Transverse colon (tissue), 4 donors: ENCODE measurements at regions of chr7 and their contacts with region 1.

Region 1: DNA sequence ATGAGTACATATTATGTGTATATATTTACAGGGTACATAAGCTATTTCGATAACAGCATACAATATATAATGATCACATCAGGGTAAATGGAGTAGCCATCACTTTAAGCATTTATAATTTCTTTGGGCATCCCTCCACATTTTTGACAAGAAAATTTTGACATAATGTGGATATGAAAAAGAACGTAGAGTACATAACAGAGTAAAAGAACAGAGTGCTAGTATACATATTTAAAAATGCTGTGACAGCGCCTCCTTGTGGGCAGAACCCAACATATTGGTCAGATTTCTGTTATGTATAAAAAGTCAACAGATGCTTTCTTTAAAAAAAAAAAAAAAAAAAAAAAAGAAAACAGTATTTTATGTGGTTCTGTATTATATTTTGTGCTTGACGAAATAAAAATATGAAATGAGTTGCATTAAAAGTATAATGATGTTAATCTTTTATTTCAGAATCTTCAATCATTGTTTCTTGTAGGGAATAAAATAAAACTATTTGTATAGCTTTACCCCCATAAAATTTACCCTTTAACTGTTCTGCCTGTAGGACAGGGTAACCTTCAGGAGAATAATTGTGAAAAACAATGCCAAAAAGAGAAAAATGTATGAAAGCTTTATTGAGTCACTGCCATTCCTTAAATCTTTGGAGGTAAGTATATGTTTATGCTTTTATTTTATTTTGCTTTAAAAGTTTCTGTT is 18.3 kb upstream of the HBP1 start:
- DNase-seq: peak; percentile 80
- H3K4me3 ChIP-seq: no peak overlapping the region
- H3K27ac ChIP-seq: no peak overlapping the region
- H3K4me1 ChIP-seq: peaks cover 0 to 10% (median 0%) of the 10 kb centered on the region in 4 donors
- H3K27me3 ChIP-seq: no peaks in the 10 kb centered on the region
- CTCF ChIP-seq: peak; percentile 62 to 70 (median 66)
- EP300 ChIP-seq: no peak
- POLR2A ChIP-seq: no peak

Region 2: GRCh38 chr7:106304568-106304967 is 846.0 kb before region 1 on chr7:
- in situ Hi-C with region 1: no loop called
- intact Hi-C with region 1: no loop called
- DNase-seq: no peak
- H3K4me3 ChIP-seq: no peak overlapping the region
- H3K27ac ChIP-seq: no peak overlapping the region
- H3K4me1 ChIP-seq: no peaks in the 10 kb centered on the region
- H3K27me3 ChIP-seq: no peaks in the 10 kb centered on the region
- CTCF ChIP-seq: no peak
- EP300 ChIP-seq: no peak
- POLR2A ChIP-seq: no peak

Region 3: DNA sequence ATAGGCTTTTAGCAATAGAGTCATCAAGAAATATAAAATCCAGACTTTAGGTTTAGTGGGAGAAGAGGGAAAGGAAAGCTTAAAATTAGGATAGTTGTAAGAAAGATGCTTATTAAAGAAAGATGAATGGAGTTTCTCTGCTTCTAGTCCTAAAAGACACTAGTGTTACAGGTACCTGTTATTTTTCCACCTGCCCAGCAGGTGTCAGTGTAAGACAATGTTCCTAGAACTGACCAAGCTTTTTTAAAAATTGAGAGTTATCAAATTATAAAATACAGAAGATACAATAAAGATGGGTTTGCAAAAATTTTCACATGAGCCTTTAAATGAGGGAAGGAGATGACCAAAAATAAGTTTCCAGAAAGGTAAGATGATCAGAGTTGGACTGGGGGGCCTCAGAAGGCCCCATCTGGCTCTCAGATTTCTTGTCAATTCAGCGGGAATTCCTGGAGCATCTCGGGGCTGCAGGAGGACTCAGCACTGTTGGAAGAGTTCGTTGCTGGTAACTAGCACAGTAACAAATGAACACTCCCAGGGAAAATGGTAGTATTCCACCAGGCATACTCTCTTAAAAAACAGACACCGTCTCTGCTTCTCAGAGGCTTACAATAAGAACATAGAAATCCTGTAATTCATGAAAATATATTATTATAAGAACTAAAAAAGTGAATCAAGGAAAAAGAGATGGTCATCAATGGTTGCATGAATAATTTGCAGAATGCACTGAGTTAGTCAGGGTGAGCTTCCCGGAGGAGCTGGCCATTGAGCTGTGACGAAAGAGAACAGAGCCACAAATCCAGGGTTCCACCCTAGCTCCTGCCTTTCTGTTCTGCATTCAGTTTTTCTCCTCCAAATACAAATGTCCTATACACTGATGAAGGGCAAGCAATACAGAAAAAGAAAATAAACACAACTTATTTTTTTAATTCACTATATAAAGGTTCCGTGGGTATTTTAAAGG is 357.2 kb before region 1 on chr7:
- in situ Hi-C with region 1: loop called (anchors 5 to 25 kb)
- intact Hi-C with region 1: no loop called
- DNase-seq: no peak
- H3K4me3 ChIP-seq: no peak overlapping the region
- H3K27ac ChIP-seq: no peak overlapping the region
- H3K4me1 ChIP-seq: no peaks in the 10 kb centered on the region
- H3K27me3 ChIP-seq: no peaks in the 10 kb centered on the region
- CTCF ChIP-seq: peak; percentile 55 to 64 (median 58)
- EP300 ChIP-seq: no peak
- POLR2A ChIP-seq: no peak

Region 4: DNA sequence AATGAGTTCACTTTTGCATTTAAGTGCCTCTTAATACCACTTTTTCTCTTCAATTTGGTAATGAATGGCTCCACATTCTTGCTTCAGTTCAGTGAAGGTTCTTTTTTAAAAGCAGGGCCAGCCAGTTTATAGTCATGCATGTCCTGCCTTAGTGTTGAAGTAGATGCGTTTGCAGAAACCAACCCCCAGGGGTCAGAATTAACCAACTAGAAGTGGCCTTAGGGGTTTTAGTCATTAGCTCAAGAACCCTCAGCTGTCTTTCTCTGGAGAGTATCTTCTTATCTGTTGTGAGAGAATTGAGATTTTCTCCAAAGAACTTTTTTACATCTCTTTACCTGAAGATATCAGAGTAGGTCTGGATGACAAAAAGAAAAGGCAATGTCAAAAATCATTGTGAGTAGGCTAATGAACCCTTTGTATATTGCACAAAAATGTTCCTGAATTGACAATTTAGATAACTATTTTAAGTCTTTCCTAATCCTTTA is 203.2 kb before region 1 on chr7:
- in situ Hi-C with region 1: loop called (anchors 5 to 10 kb)
- intact Hi-C with region 1: loop called (anchors 5 kb)
- DNase-seq: peak; percentile 44
- H3K4me3 ChIP-seq: no peak overlapping the region
- H3K27ac ChIP-seq: no peak overlapping the region
- H3K4me1 ChIP-seq: peaks cover 0 to 2% (median 0%) of the 10 kb centered on the region in 4 donors
- H3K27me3 ChIP-seq: no peaks in the 10 kb centered on the region
- CTCF ChIP-seq: peak; percentile 45 to 61 (median 47)
- EP300 ChIP-seq: no peak
- POLR2A ChIP-seq: no peak

Region 5: DNA sequence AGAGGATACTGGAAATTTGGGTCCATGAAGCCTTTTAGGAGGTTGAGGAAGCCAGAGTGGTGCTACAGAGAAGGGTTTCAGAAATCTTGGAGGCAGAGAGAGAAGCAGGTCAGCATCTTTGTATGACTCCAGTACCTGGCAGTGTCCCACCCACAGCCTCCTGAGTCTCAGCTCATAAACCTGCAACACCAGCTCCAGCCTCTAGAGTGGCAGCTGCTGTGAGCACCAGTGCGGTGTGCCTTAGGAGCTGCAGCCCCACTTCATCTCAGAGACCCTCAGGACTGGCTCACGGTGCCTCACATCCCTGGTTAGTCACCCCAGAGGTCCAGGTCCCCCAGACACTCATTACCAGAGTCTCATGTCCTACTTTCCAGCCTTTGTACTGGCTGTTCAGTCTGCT is 190.8 kb before region 1 on chr7:
- in situ Hi-C with region 1: loop called in 1 of 4 experiments (anchors 10 kb)
- intact Hi-C with region 1: no loop called
- DNase-seq: no peak
- H3K4me3 ChIP-seq: no peak overlapping the region
- H3K27ac ChIP-seq: no peak overlapping the region
- H3K4me1 ChIP-seq: no peaks in the 10 kb centered on the region
- H3K27me3 ChIP-seq: no peaks in the 10 kb centered on the region
- CTCF ChIP-seq: no peak
- EP300 ChIP-seq: no peak
- POLR2A ChIP-seq: no peak

Region 6: DNA sequence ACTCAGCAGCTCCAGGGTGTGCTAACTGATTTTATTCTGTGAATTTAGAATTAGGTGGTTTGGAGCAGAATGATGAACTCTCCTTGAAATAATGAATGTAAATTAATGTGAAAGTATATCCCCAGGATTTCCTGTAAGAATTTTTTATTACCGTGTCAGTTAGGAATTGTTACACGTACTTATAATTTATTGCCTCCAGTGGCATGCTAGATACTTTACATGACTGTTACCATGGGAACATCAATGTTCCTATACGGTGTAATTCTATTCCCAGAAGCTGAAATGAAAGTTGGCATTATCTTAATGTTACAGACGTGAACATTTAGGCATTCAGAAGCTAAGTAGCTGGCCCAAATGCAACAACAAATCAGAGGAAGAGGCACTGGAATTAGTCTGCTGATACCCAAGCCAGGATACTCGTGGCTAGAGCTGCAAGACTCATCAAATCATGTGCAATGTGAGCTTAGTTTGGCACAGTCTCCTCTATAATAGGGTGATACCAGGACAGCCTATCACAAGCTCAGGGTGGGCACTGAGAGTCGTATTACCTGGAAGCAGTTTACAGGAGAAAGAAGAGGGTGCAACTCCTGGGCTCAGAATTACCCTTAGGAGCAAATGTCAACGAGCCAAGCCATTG is 136.0 kb before region 1 on chr7:
- in situ Hi-C with region 1: no loop called
- intact Hi-C with region 1: no loop called
- DNase-seq: no peak
- H3K4me3 ChIP-seq: no peak overlapping the region
- H3K27ac ChIP-seq: no peak overlapping the region
- H3K4me1 ChIP-seq: no peaks in the 10 kb centered on the region
- H3K27me3 ChIP-seq: no peaks in the 10 kb centered on the region
- CTCF ChIP-seq: no peak
- EP300 ChIP-seq: no peak
- POLR2A ChIP-seq: no peak